CD14-positive monocyte (primary cell): ENCODE measurements at regions of chr11 and their contacts with region 1.

Region 1: GRCh38 chr11:115745610-115746512 is 241.6 kb upstream of the CADM1 start:
- DNase-seq: peak; percentile 52 to 74 (median 59)
- H3K4me3 ChIP-seq: no peak overlapping the region
- H3K4me3 Mint-ChIP-seq: peak overlapping the region in 1 of 2 donors; percentile 14
- H3K27ac ChIP-seq: no peak overlapping the region
- H3K27ac Mint-ChIP-seq: peak overlapping the region in 3 of 7 donors; percentile 4 to 46 (median 32)
- H3K4me1 ChIP-seq: no peaks in the 10 kb centered on the region
- H3K4me1 Mint-ChIP-seq: peaks cover 5% of the 10 kb centered on the region
- H3K27me3 ChIP-seq: peaks cover 8 to 24% of the 10 kb centered on the region in 2 donors
- H3K27me3 Mint-ChIP-seq: peaks cover 32 to 63% (median 37%) of the 10 kb centered on the region in 3 donors
- CTCF ChIP-seq: no peak

Region 2: GRCh38 chr11:115481528-115481927 is 264.3 kb before region 1 on chr11:
- intact Hi-C with region 1: no loop called
- DNase-seq: no peak
- H3K4me3 ChIP-seq: no peak overlapping the region
- H3K4me3 Mint-ChIP-seq: no peak overlapping the region
- H3K27ac ChIP-seq: no peak overlapping the region
- H3K27ac Mint-ChIP-seq: no peak overlapping the region
- H3K4me1 ChIP-seq: no peaks in the 10 kb centered on the region
- H3K4me1 Mint-ChIP-seq: no peaks in the 10 kb centered on the region
- H3K27me3 ChIP-seq: peaks cover 6 to 16% of the 10 kb centered on the region in 2 donors
- H3K27me3 Mint-ChIP-seq: peaks cover 8 to 11% (median 11%) of the 10 kb centered on the region in 3 donors
- CTCF ChIP-seq: no peak

Region 3: GRCh38 chr11:115606498-115607220 is 139.2 kb before region 1 on chr11:
- intact Hi-C with region 1: no loop called
- DNase-seq: no peak
- H3K4me3 ChIP-seq: no peak overlapping the region
- H3K4me3 Mint-ChIP-seq: peak overlapping the region in 1 of 2 donors; percentile 15
- H3K27ac ChIP-seq: no peak overlapping the region
- H3K27ac Mint-ChIP-seq: no peak overlapping the region
- H3K4me1 ChIP-seq: no peaks in the 10 kb centered on the region
- H3K4me1 Mint-ChIP-seq: no peaks in the 10 kb centered on the region
- H3K27me3 ChIP-seq: peaks cover 0 to 6% of the 10 kb centered on the region in 2 donors
- H3K27me3 Mint-ChIP-seq: peaks cover 8 to 20% (median 12%) of the 10 kb centered on the region in 3 donors
- CTCF ChIP-seq: no peak

Region 4: DNA sequence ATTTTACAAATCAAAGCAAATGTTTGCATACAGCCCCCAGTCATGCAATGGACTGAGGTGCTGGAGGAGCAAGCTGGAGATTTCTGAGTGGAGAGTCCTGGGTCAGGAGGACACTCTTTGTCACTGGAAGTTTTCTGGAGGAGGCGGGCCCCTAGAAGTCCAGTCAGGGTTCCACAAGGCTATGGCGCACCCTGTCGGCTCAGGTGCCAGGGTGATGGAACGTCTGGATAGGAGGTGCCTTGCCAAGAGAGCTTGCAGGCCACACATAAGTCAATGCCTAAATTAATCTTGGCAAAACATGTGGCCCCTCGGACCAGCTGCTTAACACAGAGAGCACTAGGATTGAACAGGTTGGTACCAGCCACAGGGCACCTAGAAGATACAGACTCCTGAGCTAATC is 66.9 kb before region 1 on chr11:
- intact Hi-C with region 1: loop called (anchors 5 kb)
- DNase-seq: no peak
- H3K4me3 ChIP-seq: no peak overlapping the region
- H3K4me3 Mint-ChIP-seq: no peak overlapping the region
- H3K27ac ChIP-seq: no peak overlapping the region
- H3K27ac Mint-ChIP-seq: no peak overlapping the region
- H3K4me1 ChIP-seq: no peaks in the 10 kb centered on the region
- H3K4me1 Mint-ChIP-seq: no peaks in the 10 kb centered on the region
- H3K27me3 ChIP-seq: no peaks in the 10 kb centered on the region
- H3K27me3 Mint-ChIP-seq: peaks cover 2 to 5% (median 4%) of the 10 kb centered on the region in 3 donors
- CTCF ChIP-seq: no peak

Region 5: GRCh38 chr11:115707180-115707905 is 38.5 kb before region 1 on chr11:
- intact Hi-C with region 1: no loop called
- DNase-seq: peak; percentile 94 to 95 (median 94)
- H3K4me3 ChIP-seq: no peak overlapping the region
- H3K4me3 Mint-ChIP-seq: peak overlapping the region in 1 of 2 donors; percentile 66
- H3K27ac ChIP-seq: peak overlapping the region; percentile 63 to 96
- H3K27ac Mint-ChIP-seq: peak overlapping the region; percentile 92 to 98 (median 96)
- H3K4me1 ChIP-seq: peaks cover 67 to 71% of the 10 kb centered on the region in 2 donors
- H3K4me1 Mint-ChIP-seq: peaks cover 65% of the 10 kb centered on the region
- H3K27me3 ChIP-seq: peaks cover 0 to 7% of the 10 kb centered on the region in 2 donors
- H3K27me3 Mint-ChIP-seq: peaks cover 12 to 15% (median 14%) of the 10 kb centered on the region in 3 donors
- CTCF ChIP-seq: no peak